Left ventricle myocardium inferior (tissue), 1 donor: ENCODE measurements at regions of chr1 and their contacts with region 1.

Region 1: DNA sequence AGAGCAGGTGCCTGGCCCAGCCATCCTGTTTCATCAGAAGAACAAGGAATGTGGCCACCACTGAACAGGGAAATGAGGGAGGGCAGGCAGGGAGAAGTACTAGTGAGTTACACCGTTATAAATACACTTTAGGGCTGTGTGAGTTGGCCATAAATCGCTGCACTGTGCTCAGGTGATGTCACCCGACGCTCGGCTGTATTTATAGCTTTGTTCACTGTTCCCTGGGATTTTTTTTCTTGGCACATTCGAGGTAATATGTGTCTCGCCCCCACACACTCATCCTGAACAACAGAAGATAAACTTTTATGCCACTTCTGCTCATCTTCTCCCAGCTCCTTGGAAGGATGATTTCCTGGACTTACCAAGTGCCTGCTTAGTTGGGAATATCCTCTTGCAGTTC is 9.0 kb upstream of the KIRREL1 start:
- DNase-seq: no peak
- H3K4me3 ChIP-seq: no peak overlapping the region
- H3K27ac ChIP-seq: no peak overlapping the region
- H3K4me1 ChIP-seq: no peaks in the 10 kb centered on the region
- H3K27me3 ChIP-seq: peaks cover 18% of the 10 kb centered on the region
- CTCF ChIP-seq: no peak

Region 2: GRCh38 chr1:157925419-157926166 is 58.9 kb before region 1 on chr1:
- intact Hi-C with region 1: no loop called
- DNase-seq: no peak
- H3K4me3 ChIP-seq: no peak overlapping the region
- H3K27ac ChIP-seq: no peak overlapping the region
- H3K4me1 ChIP-seq: no peaks in the 10 kb centered on the region
- H3K27me3 ChIP-seq: no peaks in the 10 kb centered on the region
- CTCF ChIP-seq: no peak

Region 3: GRCh38 chr1:158055854-158056253 is 71.4 kb after region 1 on chr1:
- intact Hi-C with region 1: no loop called
- DNase-seq: no peak
- H3K4me3 ChIP-seq: no peak overlapping the region
- H3K27ac ChIP-seq: no peak overlapping the region
- H3K4me1 ChIP-seq: peaks cover 59% of the 10 kb centered on the region
- H3K27me3 ChIP-seq: no peaks in the 10 kb centered on the region
- CTCF ChIP-seq: no peak

Region 4: DNA sequence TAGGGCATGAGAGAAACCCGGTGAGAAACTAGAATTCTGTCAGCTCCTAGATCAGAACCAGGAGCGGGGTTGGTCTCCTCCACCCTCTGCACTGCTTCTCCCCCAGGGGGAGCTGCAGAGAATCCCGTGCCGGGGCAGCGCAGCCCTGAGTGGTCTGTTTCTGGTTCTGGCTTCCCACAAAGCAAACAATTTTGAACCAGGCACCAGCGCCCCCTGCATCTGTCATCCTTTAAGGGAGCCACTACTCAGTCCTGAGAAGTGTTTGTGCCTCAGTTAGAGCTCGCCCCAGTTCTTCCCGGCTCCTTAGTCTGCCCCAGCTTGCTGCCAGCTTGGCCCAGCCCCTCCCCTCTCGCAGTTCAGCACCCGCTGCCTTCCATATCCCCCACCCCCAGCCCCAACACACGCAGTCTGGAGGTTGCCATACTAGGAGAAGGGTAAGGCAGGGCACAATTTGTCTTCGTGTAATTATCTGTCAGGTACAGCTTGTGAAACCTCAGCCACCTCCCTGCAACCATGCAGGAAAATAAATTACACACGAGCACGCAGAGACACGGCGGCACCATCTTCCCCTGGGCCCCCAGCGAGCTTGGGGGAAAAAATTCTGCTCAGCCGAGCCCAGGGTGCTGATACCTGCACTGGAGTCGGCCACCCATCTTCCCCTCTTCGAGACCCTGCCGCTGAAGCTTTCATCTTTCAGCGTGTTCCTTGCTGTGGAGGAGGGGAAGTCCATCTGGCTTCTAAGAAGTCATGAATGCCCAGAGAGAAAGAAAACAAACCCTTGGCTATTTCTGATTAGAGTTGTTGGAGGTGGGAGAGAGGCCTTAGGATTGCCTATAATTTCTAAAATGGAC is 133.6 kb after region 1 on chr1:
- intact Hi-C with region 1: loop called (anchors 10 kb)
- DNase-seq: no peak
- H3K4me3 ChIP-seq: peak overlapping the region; percentile 43
- H3K27ac ChIP-seq: no peak overlapping the region
- H3K4me1 ChIP-seq: peaks cover 19% of the 10 kb centered on the region
- H3K27me3 ChIP-seq: peaks cover 97% of the 10 kb centered on the region
- CTCF ChIP-seq: peak; percentile 61

Region 5: GRCh38 chr1:158506369-158506987 is 522.0 kb after region 1 on chr1:
- intact Hi-C with region 1: no loop called
- DNase-seq: no peak
- H3K4me3 ChIP-seq: no peak overlapping the region
- H3K27ac ChIP-seq: no peak overlapping the region
- H3K4me1 ChIP-seq: no peaks in the 10 kb centered on the region
- H3K27me3 ChIP-seq: no peaks in the 10 kb centered on the region
- CTCF ChIP-seq: peak; percentile 38